ENCODE measurements at regions of chr9 and their contacts with region 1.

Region 1: DNA sequence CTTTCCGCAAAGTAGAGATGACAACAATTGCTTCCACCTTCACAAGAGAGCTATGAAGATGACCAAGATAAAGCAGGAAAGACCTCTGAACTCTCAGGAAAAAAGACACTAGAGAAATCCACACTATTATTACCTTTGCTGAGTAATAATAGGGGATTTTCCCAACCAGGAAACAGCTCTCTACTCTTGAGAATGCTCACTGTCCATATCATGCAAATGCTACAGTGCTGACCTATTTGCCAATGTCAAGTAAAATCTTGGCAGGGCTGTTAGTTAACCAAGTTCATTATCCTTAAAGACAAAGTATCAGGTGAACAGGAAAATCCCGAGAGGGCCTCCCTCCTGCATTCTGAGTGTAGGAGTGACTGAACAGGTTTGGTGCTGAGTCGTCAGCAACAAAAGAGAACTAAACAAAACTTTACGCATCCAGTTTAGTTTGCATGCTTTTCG is 306.6 kb downstream of the ACTL7B start:
- DNase-seq: no peak
- H3K4me3 ChIP-seq: no peak overlapping the region
- H3K27me3 ChIP-seq: no peaks in the 10 kb centered on the region
- CTCF ChIP-seq: no peak

Region 2: GRCh38 chr9:108535526-108535925 is 13.6 kb before region 1 on chr9:
- CTCF ChIA-PET with region 1: interaction called, 10 read pairs
- POLR2A ChIA-PET with region 1: interaction called, 3 read pairs
- DNase-seq: no peak
- H3K4me3 ChIP-seq: no peak overlapping the region
- H3K27me3 ChIP-seq: no peaks in the 10 kb centered on the region; the same call in 1 of the 2 replicates
- CTCF ChIP-seq: peak; percentile 24; the same call in 1 of the 2 replicates

Measured in BJ (cell line).